ENCODE measurements at regions of chr20 and their contacts with region 1.

Region 1: DNA sequence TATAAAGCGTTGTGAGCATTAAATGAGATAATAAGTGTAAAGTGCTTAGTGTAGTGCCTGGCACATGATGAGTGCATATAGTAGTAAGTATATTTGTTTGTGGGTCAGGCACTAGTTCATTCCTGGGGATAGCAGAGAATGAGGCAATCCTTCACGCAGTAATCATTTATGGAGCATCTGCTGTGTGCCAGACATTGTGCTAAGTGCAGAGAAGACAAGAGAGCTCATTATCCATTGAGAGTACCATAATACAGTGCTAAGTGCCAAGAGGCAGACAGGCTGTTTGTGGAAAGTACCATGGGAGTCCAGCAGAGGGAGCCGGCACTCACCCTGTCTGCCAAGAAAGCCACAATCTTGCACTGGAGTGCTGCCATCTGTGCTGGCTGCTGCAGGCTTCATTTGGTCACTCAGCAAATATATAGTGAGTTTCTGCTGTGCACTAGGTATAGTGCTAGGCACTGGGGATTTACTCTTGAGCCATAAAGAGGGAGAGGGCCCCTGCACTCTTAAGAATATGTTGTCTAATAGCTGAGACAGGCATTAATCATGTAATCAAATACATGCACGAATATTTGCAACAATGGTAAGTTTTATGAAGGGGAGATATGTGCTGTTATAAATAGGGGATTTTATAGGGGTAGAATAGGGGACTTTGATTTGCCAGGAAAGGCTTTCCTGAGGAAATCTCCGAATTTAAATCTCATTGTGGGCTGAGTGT is 12.9 kb upstream of the MROH8 start:
- DNase-seq: peak; percentile 84 to 92 (median 90)
- H3K4me3 ChIP-seq: no peak overlapping the region
- H3K27ac ChIP-seq: no peak overlapping the region
- H3K4me1 ChIP-seq: peaks cover 1% of the 10 kb centered on the region
- H3K27me3 ChIP-seq: no peaks in the 10 kb centered on the region
- CTCF ChIP-seq: peak; percentile 79 to 90 (median 84)
- EP300 ChIP-seq: no peak
- POLR2A ChIP-seq: no peak

Region 2: GRCh38 chr20:37142708-37143107 is 49.6 kb before region 1 on chr20:
- intact Hi-C with region 1: no loop called
- DNase-seq: no peak
- H3K4me3 ChIP-seq: no peak overlapping the region
- H3K27ac ChIP-seq: no peak overlapping the region
- H3K4me1 ChIP-seq: no peaks in the 10 kb centered on the region
- H3K27me3 ChIP-seq: no peaks in the 10 kb centered on the region
- CTCF ChIP-seq: no peak
- EP300 ChIP-seq: no peak
- POLR2A ChIP-seq: no peak

Region 3: GRCh38 chr20:37392421-37393178 is 200.3 kb after region 1 on chr20:
- intact Hi-C with region 1: loop called in 2 of 4 experiments (anchors 5 to 10 kb)
- DNase-seq: peak in 1 of 5 donors; percentile 21
- H3K4me3 ChIP-seq: no peak overlapping the region
- H3K27ac ChIP-seq: no peak overlapping the region
- H3K4me1 ChIP-seq: peaks cover 3% of the 10 kb centered on the region
- H3K27me3 ChIP-seq: no peaks in the 10 kb centered on the region
- CTCF ChIP-seq: no peak
- EP300 ChIP-seq: no peak
- POLR2A ChIP-seq: no peak